ENCODE measurements at regions of chr1 and their contacts with region 1.

Region 1: DNA sequence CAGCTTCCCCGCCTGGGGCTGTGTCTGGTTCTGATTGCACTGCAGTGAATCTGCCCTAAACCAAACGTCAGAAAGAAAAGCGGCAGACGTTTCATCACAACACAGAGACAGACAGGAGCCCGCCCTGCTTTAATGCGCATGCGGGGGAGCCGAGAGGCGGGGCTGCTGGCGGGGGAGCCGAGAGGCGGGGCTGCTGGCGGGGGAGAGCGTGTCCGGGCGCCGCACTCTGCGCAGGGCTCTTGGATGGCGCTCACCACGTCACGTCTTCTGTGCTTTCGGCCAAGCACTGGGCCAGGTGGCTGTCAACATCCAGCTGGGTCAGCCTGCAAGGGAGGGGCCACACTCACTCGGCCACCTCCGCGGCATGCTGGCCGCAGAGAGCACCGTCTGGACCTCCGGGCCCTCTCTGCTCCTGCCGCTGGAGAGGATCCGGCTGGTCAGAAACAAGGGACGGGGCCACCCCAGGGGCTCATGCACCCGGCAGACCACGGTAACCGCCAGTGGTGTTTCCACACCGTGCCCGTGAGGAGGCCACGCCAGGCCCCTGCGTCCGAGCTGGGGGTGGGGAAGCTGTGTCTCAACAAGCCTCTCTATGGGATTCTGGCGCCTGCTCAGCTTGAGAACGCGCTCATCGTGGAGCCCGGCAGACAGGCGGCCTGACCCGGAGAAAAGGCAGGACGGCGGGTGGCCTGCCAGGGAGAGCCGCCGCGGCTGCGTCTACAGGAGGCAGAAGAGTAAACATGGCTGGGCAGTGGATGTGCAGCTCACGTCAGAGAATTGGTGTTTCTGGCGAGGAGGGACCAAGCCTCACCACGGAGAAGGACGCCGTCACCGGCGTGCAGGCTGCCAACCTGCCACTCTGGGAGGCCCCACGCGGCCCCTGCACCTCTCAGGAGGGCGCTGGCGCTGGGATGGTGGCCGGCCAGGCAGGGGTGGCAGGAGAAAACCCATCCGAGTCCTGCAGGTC is 4.8 kb downstream of the FAAP20 start:
- DNase-seq: peak; percentile 86 to 97
- H3K4me3 ChIP-seq: peak overlapping the region; percentile 60 to 73
- H3K27ac ChIP-seq: peak overlapping the region; percentile 94 to 97
- H3K4me1 ChIP-seq: peaks cover 26 to 38% of the 10 kb centered on the region in 2 donors
- H3K27me3 ChIP-seq: no peaks in the 10 kb centered on the region
- CTCF ChIP-seq: peak in 1 of 3 experiments; percentile 3

Region 2: DNA sequence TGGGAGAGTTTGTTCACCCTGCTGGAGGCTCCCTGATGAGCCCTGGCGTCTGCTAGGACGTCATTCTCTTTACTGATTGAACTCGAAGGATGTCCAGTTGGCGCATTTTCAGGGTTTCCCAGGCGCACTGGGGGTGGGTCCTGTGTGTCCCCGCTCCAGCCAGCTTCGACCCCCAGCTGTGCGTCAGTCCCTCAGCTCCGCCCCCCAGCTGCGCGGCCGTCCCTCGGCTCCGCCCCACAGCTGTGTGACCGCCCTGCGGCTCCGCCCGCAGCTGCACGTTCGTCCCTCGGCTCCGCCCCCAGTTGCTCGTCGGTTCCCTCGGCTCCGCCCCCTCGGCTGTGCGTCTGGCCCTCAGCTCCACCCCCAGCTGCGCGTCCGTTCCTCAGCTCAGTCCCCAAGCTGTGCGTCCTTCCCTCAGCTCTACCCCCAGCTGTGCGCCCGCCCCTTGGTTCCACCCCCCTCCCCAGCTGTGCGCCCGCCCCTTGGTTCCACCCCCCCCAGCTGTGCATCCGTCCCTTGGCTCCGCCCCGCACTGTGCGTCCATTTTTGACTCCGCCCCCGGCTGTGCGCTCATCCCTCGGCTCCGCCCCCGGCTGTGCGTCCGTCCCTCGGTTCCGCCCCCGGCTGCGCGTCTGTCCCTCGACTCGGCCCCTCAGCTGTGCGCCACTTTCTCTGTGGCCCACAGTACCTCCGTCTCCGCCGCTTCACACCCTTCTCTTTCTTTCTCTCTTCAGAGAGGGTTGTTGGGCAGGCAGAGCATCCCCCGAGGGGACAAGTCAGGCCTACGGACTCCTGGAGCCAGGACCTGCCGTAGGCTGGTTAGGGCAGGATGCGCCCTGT is 56.5 kb before region 1 on chr1:
- intact Hi-C with region 1: loop called (anchors 5 kb)
- DNase-seq: peak; percentile 87 to 97
- H3K4me3 ChIP-seq: peak overlapping the region; percentile 33 to 64
- H3K27ac ChIP-seq: peak overlapping the region; percentile 77 to 87
- H3K4me1 ChIP-seq: peaks cover 0 to 12% of the 10 kb centered on the region in 2 donors
- H3K27me3 ChIP-seq: no peaks in the 10 kb centered on the region
- CTCF ChIP-seq: no peak

Region 3: DNA sequence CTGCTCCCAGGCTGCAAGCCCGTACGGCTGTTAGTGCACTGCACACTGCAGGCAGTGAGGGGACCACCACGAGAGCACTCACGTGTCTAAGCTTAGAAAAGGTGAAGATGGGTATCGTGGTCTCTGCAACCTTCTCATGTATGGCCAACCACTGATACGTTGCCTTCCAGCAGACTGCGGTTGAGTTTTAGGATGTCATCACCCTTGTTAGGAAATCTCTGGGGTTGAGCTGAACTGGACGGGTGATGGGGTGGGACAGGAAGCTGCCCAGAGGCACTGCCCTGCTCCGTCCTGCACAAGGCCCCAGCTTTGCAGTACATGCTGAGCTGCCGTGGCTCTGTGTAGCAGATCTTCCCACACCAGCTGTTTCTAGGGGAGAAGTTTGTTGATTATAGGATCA is 38.5 kb before region 1 on chr1:
- intact Hi-C with region 1: no loop called
- DNase-seq: no peak
- H3K4me3 ChIP-seq: no peak overlapping the region
- H3K27ac ChIP-seq: no peak overlapping the region
- H3K4me1 ChIP-seq: no peaks in the 10 kb centered on the region
- H3K27me3 ChIP-seq: no peaks in the 10 kb centered on the region
- CTCF ChIP-seq: no peak

Region 4: DNA sequence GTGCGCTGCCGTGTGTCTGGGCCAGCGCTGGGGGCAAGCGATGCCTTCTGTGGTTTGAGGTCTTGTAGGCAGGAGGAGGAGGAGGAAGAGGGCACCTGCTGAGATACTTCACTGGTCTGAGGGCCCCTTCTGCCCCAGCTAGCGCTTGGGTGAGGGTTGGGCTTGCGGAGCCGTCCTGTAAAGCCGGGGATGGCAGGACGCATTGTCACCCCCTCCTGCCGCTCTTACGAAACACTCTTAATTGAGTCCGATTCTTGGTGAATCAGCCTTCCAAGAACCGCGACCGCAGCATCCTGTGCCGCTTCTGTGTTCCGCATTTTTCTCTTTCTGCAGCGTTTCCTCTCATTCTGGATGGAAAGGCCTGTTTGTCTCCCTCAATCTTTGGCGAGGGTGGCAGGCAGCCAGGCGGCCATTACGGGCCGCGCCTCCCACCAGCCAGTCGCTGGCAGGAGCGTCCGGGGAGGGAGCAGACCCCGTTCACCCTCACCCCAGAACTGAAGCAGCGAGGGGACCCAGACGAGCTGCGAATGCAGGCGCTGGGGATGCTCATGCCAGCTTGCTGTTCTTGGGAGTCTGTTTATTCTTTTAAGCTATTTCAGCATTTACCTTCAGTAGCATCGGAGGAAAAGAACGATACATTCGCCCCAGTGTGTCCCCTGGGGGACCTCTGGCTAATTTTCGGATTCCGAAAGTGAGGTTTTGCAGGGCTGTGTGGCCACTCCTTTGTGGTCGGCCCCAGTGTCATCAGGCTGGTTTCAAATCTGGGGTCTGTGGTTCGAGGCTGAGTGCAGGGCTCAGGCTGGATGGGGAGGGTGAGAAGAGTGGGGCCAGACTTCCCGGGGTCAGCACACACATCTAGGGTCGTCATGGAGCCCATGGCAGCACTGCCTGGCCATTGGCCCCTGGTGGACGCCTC is 101.1 kb after region 1 on chr1:
- intact Hi-C with region 1: no loop called
- DNase-seq: peak; percentile 71 to 96
- H3K4me3 ChIP-seq: peak overlapping the region; percentile 37 to 50
- H3K27ac ChIP-seq: peak overlapping the region; percentile 86 to 89
- H3K4me1 ChIP-seq: peaks cover 38 to 83% of the 10 kb centered on the region in 2 donors
- H3K27me3 ChIP-seq: no peaks in the 10 kb centered on the region
- CTCF ChIP-seq: no peak

Measured in ascending aorta (tissue), 2 donors.